ENCODE measurements at regions of chr12 and their contacts with region 1.

Region 1: DNA sequence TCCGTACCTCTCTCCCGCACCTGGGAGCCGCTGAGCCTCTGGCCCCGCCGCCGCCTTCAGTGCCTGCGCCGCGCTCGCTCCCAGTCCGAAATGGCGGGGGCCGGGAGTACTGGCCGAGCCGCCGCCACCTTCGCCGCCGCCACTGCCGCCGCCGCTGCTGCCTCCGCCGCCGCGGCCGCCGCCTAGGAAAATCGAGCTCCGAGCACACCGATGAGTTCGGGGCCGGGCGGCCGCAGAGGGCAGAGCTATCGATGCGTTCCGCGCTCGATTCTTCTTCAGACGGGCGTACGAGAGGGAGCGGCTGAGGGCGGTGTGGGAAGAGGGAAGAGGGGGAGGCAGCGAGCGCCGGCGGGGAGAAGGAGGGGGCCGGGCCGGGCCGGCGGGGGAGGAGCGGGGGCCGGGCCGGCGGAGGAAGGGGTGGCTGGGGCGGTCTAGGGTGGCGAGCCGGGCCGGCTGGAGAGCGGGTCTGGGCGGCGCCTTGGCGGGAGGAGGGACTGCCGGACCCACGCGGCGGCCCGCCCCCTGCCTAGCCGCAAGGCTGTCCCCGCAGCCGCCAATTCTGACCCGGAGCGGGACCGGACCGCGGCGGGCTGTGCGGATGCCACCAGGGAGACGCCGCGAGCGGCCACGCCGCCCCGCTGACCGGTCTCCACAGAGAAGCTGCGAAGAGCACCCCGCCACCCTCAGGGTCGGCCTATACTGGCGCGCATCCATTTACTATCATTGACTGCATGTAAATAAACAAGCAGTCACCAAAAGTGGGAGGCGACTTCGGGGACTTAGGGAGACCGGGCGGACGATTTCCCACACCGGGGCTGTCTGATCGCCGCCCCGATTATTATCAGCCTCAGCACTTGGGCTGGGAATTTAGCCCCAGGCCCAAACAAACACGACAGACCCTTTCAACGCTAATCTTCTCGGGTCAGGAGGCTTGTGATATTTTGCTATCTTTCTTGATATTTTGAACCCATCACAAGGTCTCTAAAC is at the start of gene KRAS:
- DNase-seq: peak; percentile 97 to 98
- ATAC-seq: peak; percentile 96 to 99 (median 98)
- H3K4me3 ChIP-seq: peak within 1 kb of the TSS; percentile 78 to 98 (median 93)
- H3K27ac ChIP-seq: peak within 1 kb of the TSS; percentile 93 to 97 (median 94)
- H3K4me1 ChIP-seq: peaks cover 3 to 31% (median 15%) of the 10 kb centered on the region in 9 donors
- H3K27me3 ChIP-seq: no peaks in the 10 kb centered on the region
- CTCF ChIP-seq: peak in 2 of 9 donors; percentile 4 to 13
- total RNA-seq, gene KRAS: 8.4 to 14.1 (median 11.7) TPM

Region 2: DNA sequence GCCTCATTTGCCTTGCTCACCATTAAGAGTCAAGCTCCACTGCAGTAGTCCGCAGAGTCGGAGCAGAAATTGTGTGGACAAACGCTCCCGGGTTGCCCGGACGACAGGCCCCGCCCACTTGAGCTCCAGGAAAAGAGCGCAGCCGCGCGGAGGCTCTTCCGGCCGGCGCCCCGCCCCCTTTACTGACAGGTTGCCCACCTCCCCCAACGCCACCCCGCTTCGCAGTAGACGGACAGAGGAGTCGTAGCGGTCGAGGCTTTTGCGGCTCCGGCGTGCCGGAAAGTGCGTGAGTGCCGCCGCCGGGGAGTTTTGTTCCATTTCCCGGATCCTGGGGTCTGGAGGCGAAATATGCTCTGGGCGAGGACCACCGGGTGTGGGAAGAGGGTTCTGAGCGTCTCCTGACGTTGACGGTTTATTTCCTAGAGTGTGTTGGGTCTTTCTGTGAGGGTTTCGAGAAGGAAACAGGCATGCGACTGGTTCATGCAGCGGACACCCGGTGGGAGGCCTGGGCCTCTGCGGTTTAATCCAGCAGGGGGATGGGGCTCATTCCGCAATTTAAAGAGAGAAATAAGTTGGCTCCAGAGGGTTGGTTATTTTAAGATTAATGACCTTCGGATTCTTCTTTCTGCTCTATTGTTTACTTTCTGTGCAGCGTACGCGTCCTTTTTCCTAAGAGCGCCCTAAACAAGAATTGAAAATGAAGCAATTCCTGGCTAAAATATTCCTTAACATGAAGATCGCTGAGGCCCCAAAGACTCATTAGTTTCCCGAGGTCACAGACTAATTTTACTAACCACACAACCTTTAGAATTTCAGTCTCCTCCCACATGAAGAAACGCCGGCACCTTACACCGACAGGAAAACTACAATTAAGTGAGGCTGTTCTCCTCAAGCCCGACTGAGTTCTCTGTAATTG is 55.7 kb before region 1 on chr12 and contains the starts of genes DNAI7 and ETFRF1:
- intact Hi-C with region 1: loop called in 3 of 10 experiments (anchors 2 to 5 kb)
- DNase-seq: peak; percentile 98 to 99
- ATAC-seq: peak; percentile 99 to 100 (median 100)
- H3K4me3 ChIP-seq: peak within 1 kb of the TSS; percentile 43 to 84 (median 68)
- H3K27ac ChIP-seq: peak within 1 kb of the TSS; percentile 84 to 95 (median 94)
- H3K4me1 ChIP-seq: peaks cover 3 to 31% (median 18%) of the 10 kb centered on the region in 9 donors
- H3K27me3 ChIP-seq: no peaks in the 10 kb centered on the region
- CTCF ChIP-seq: no peak
- total RNA-seq, gene DNAI7: 0.47 to 1.8 (median 0.86) TPM
- total RNA-seq, gene ETFRF1: 44.2 to 67.6 (median 52.2) TPM

Region 3: DNA sequence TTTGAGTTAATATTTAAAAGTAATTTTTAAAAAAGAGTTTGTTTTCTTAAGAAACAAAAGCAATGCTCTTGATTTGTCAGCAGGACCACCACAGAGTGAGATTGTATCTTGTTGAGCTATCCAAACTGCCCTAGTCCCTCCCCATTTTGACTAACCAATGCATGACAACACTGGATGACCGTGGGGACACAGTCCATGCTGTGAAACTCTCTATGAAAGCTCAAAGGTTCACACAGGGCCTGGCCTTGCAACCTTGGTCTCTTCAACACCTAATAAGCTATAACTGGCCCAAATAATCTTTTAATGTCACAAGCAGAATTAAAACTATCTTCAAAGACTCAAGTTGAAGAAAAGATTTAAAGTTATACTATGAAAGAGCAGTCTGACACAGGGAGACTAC is 42.5 kb before region 1 on chr12:
- intact Hi-C with region 1: loop called in 1 of 10 experiments (anchors 5 kb)
- DNase-seq: no peak
- ATAC-seq: no peak
- H3K4me3 ChIP-seq: no peak overlapping the region
- H3K27ac ChIP-seq: no peak overlapping the region
- H3K4me1 ChIP-seq: peaks cover 0 to under 1% (median 0%) of the 10 kb centered on the region in 9 donors
- H3K27me3 ChIP-seq: no peaks in the 10 kb centered on the region
- CTCF ChIP-seq: no peak

Region 4: DNA sequence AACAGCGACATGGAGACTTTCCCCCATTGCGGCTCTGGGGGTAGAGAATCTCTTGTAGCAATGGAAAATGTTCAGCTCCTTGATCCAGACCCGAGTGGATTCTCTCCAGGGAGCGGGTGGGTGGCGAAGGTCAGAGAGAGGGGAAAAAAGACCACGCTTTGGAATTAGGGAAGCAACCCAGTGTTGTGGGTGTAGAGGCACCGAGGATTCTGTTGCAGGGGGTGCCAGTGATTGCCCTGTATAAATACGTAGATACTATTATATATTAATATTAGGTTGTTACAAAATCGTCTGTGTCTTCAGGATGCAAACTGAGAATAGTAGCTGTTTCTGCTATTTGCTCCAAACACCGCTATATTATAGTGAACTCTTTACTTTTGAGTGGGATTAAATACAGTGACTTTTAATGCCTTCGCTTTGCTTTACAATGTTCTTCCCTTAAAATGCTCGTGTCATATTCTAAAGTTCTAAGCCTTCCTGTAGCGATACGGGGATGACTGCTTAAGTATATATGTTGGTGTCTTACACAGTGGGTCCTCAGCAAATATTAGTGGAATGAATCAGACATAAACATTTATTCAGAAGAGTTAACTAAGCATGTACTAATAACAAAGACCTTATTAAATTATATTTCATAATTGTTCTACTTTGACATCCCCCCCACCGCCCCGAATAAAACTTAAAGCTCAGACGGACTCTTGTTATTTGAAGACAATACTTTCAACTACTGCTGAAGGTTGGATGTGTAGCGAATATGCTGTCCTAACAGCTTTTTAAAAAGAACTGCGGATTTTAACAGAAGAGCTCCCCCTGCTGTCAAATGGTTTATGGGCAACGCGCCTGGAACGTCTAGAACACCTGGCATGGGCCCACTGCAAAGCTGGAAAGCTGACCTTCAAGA is 136.0 kb after region 1 on chr12:
- intact Hi-C with region 1: loop called in 2 of 10 experiments (anchors 2 to 5 kb)
- DNase-seq: peak; percentile 73 to 90
- ATAC-seq: peak; percentile 15 to 72 (median 54)
- H3K4me3 ChIP-seq: peak overlapping the region; percentile 26 to 82 (median 66)
- H3K27ac ChIP-seq: peak overlapping the region; percentile 95 to 100 (median 100)
- H3K4me1 ChIP-seq: peaks cover 0 to 25% (median 8%) of the 10 kb centered on the region in 9 donors
- H3K27me3 ChIP-seq: no peaks in the 10 kb centered on the region
- CTCF ChIP-seq: peak; percentile 76 to 93 (median 84)

Measured in heart right ventricle (tissue), 16 donors.